SK-N-SH (cell line): ENCODE measurements at regions of chr2 and their contacts with region 1.

Region 1: GRCh38 chr2:200901459-200902072 is 12.4 kb downstream of the NIF3L1 start:
- DNase-seq: peak; percentile 79
- H3K4me3 ChIP-seq: no peak overlapping the region
- H3K27ac ChIP-seq: peak overlapping the region; percentile 45 to 62; a peak in 3 of 4 replicates
- H3K4me1 ChIP-seq: no peaks in the 10 kb centered on the region; a peak in 1 of 4 replicates
- H3K27me3 ChIP-seq: no peaks in the 10 kb centered on the region
- CTCF ChIP-seq: peak; percentile 80
- EP300 ChIP-seq: no peak
- RAD21 ChIP-seq: peak; percentile 82

Region 2: GRCh38 chr2:200888704-200889625 is 12.6 kb before region 1 on chr2 and contains the starts of genes NIF3L1 and PPIL3:
- CTCF ChIA-PET with region 1: interaction called, 12 read pairs
- POLR2A ChIA-PET with region 1: interaction called, 5 read pairs
- DNase-seq: peak; percentile 84
- H3K4me3 ChIP-seq: peak within 1 kb of the TSS; percentile 81 to 89
- H3K27ac ChIP-seq: peak within 1 kb of the TSS; percentile 95 to 96
- H3K4me1 ChIP-seq: peaks cover 2 to 10% of the 10 kb centered on the region in 2 experiments; a peak in 3 of 4 replicates
- H3K27me3 ChIP-seq: no peaks in the 10 kb centered on the region
- CTCF ChIP-seq: no peak; the same call in 1 of the 2 replicates
- EP300 ChIP-seq: peak in 1 of 2 experiments; percentile 38; a peak in 1 of 4 replicates
- RAD21 ChIP-seq: no peak
- polyA plus RNA-seq, gene NIF3L1: 52.4 and 77.6 TPM in 2 replicates
- polyA plus RNA-seq, gene PPIL3: 44.9 and 56.5 TPM in 2 replicates

Region 3: GRCh38 chr2:200913654-200914053 is 12.1 kb after region 1 on chr2:
- CTCF ChIA-PET with region 1: interaction called, 12 read pairs
- POLR2A ChIA-PET with region 1: no interaction called
- DNase-seq: no peak
- H3K4me3 ChIP-seq: no peak overlapping the region
- H3K27ac ChIP-seq: peak overlapping the region in 1 of 2 experiments; percentile 27; a peak in 1 of 4 replicates
- H3K4me1 ChIP-seq: no peaks in the 10 kb centered on the region
- H3K27me3 ChIP-seq: no peaks in the 10 kb centered on the region
- CTCF ChIP-seq: no peak
- EP300 ChIP-seq: no peak
- RAD21 ChIP-seq: no peak

Region 4: DNA sequence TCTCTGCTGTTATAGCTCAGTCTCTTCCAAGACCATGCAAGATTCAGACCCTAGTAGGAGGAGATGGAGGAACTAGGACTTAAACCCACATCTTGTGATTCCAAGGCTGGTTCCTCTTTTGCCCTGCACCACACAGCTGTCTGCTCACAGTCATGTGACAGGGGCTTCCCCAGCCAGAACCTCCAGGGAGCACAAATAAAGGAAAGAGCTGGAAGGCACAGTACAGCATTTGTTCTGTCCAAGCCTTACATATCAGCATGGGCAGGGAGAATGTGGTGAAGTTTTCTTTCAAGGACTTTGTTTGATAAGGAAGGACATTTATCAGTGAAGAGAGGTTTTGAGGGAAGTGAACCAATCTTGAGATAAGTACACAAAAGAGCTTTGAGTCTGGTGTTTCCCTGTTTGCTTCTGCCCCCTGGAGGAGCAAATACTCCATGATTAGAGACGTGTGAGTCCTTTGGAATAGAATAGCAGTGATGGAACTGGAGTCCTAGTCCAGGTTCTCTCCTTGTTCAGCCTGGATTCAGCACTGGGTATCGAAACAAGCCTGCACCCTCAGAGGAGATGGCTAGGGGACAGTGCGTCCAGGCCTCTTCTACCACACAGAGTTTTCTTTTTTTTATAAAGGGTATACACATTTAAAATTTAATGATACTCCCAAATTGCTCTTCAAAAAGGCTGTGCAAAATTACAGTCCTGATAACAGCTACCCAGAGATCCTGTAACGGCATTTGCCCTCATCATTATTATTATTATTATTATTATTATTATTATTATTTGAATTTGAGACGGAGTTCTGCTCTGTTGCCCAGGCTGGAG is 256.8 kb after region 1 on chr2:
- CTCF ChIA-PET with region 1: interaction called, 21 read pairs
- POLR2A ChIA-PET with region 1: no interaction called
- DNase-seq: peak; percentile 76
- H3K4me3 ChIP-seq: no peak overlapping the region; a peak in 1 of 4 replicates
- H3K27ac ChIP-seq: peak overlapping the region; percentile 60 to 71
- H3K4me1 ChIP-seq: peaks cover 5% of the 10 kb centered on the region in 2 experiments; a peak in 2 of 4 replicates
- H3K27me3 ChIP-seq: no peaks in the 10 kb centered on the region
- CTCF ChIP-seq: peak; percentile 84
- EP300 ChIP-seq: no peak
- RAD21 ChIP-seq: peak; percentile 91

Region 5: DNA sequence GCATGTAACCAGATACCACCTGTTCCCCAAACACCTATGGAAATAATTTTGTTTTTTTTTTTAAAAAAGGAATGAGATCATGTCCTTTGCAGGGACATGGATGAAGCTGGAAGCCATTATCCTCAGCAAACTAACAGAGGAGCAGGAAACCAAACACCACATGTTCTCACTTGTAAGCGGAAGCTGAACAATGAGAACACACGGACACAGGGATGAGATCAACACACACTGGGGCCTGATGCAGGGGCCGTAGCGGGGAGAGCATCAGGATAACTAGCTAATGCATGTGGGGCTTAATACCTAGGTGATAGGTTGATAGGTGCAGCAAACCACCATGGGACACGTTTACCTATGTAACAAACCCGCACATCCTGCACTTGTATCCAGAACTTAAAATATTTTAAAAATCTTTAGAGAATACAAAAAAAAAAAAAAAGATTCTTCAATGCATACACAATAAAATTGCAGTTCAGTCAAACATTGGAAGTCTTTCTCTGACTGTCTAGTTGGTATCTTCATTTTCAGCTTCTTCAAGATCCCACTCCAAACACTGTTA is 269.8 kb after region 1 on chr2:
- CTCF ChIA-PET with region 1: interaction called, 39 read pairs
- POLR2A ChIA-PET with region 1: no interaction called
- DNase-seq: no peak
- H3K4me3 ChIP-seq: no peak overlapping the region
- H3K27ac ChIP-seq: no peak overlapping the region
- H3K4me1 ChIP-seq: no peaks in the 10 kb centered on the region
- H3K27me3 ChIP-seq: no peaks in the 10 kb centered on the region
- CTCF ChIP-seq: no peak
- EP300 ChIP-seq: no peak
- RAD21 ChIP-seq: no peak

Region 6: GRCh38 chr2:201182650-201183364 is 281.2 kb after region 1 on chr2 and contains the start of gene CASP10:
- CTCF ChIA-PET with region 1: interaction called, 39 read pairs
- POLR2A ChIA-PET with region 1: no interaction called
- DNase-seq: no peak
- H3K4me3 ChIP-seq: no peak within 1 kb of the TSS
- H3K27ac ChIP-seq: no peak within 1 kb of the TSS
- H3K4me1 ChIP-seq: no peaks in the 10 kb centered on the region
- H3K27me3 ChIP-seq: no peaks in the 10 kb centered on the region
- CTCF ChIP-seq: no peak
- EP300 ChIP-seq: no peak
- RAD21 ChIP-seq: no peak
- polyA plus RNA-seq, gene CASP10: 0.12 and 0.31 TPM in 2 replicates